Activated naive CD8-positive, alpha-beta T cell treated with anti-CD3 and anti-CD28 coated beads, Interleukin-2, amount 10 ng/mL, durations not matched to agents 7 days and 5 days (primary cell): ENCODE measurements at regions of chr22 and their contacts with region 1.

Region 1: GRCh38 chr22:50469377-50470305 is 5.2 kb downstream of the SBF1 start:
- DNase-seq: peak; percentile 91
- ATAC-seq: peak; percentile 77
- H3K4me3 Mint-ChIP-seq: peak overlapping the region; percentile 77
- H3K27ac Mint-ChIP-seq: peak overlapping the region; percentile 92
- H3K4me1 Mint-ChIP-seq: peaks cover 52% of the 10 kb centered on the region
- H3K27me3 Mint-ChIP-seq: no peaks in the 10 kb centered on the region

Region 2: DNA sequence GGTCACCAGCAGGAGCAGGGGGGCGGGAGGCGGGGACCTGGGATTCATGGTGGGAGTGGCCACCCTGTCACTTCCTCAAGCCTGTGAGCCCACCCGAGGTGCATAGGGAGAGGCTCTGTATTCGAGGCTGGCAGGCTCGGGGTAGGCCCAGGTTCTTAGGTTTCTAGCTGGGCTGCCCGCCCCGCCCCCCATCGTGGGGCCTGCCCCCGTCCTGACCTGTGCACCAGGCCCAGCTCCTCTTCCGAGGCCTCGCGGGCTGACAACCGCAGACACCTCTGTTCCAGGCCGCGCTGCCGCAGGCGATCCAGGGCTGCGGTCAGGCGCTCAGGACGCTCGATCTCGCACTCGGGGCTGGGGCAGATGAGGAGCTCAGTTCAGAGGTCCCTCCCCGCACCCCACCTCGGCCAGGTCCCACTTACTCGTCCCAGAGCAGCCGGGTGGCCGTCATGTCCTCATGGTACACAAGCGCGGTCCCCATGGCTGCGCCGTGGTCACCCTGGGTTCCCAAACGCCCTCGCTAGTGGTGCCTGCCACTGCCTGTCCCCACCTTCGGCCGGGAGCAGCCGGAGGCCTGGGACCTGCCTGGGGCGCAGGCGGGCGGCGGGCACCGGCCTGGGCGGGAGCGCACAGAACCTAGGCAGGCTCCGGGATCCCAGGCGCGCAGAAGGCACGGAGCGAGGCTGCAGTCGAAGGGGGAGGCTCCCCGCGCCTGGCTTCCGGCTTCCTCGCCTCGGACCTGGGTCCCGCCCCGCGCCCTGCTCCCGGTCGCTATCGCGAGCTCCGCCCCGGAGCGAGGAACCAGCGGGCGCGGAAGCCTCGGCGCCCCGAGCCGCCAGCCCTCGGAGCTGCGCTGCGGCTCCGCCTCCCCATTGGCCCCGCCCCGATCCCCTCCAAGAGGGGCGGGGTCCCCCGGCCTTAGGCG is 218.8 kb before region 1 on chr22 and contains the start of gene HDAC10:
- POLR2A ChIA-PET with region 1: interaction called, 11 read pairs
- DNase-seq: peak; percentile 90
- ATAC-seq: peak; percentile 83
- H3K4me3 Mint-ChIP-seq: peak within 1 kb of the TSS; percentile 87
- H3K27ac Mint-ChIP-seq: peak within 1 kb of the TSS; percentile 84
- H3K4me1 Mint-ChIP-seq: peaks cover 7% of the 10 kb centered on the region
- H3K27me3 Mint-ChIP-seq: no peaks in the 10 kb centered on the region
- total RNA-seq, gene HDAC10: 99.1 to 111 TPM

Region 3: GRCh38 chr22:50417411-50418210 is 52.0 kb before region 1 on chr22:
- POLR2A ChIA-PET with region 1: no interaction called
- DNase-seq: no peak
- ATAC-seq: no peak
- H3K4me3 Mint-ChIP-seq: no peak overlapping the region
- H3K27ac Mint-ChIP-seq: no peak overlapping the region
- H3K4me1 Mint-ChIP-seq: peaks cover 2% of the 10 kb centered on the region
- H3K27me3 Mint-ChIP-seq: no peaks in the 10 kb centered on the region

Region 4: DNA sequence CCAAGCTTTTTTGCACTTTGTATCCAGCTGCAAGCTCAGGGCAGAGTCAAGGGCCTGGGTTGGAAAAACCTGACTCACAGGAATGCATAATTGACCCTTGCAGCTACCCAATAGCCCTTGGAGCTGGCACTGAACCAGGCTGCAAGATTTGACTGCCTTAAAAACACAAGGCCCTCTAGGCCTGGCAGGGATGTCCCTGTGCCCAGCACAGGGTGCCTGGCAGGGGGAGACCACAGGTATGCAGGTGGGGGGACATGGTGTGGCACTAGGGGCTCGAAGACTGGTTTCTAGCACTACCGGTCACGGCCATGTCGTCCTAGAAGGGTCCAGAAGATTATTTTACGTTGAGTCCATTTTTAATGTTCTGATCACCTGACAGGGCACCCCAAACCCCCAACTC is 25.0 kb before region 1 on chr22:
- POLR2A ChIA-PET with region 1: interaction called, 13 read pairs
- DNase-seq: no peak
- ATAC-seq: no peak
- H3K4me3 Mint-ChIP-seq: no peak overlapping the region
- H3K27ac Mint-ChIP-seq: peak overlapping the region; percentile 90
- H3K4me1 Mint-ChIP-seq: peaks cover 19% of the 10 kb centered on the region
- H3K27me3 Mint-ChIP-seq: no peaks in the 10 kb centered on the region

Region 5: DNA sequence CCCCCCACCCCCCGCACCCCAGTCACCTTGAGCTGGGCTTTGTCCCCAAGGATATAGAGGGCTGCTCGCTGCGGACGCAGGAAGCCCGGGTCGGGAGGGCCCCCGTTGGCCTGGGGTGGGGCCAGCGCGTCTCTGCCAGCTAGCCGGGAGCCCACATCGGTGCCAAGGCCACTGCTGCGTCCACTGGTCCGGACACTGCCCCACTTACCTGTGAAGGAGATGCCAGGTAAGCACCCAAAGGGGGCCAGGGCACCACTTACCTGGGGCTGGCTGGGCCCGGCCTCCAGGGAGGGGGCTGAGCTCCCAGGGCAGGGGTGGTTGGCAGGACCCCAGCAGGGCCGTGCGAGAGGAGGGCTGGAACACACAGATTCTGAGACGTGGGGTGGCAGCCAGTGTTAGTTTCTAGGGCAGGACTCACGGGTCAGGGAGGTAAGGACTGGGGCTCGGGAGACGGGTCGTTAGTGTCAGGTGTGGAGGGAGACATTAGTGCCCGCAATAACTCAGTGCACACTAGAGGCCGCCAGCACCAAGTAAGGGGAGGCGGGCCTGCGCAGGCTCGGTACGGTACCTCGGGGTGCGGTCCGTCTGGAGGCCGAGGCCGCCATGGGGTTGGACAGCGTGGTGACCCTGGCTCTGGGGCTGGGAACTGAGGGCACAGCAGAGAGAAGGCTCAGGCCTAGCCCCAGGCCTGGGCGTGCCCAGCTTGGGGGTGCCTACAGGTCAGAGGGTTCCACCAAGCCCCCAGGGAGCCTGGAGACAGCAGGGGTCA is 13.0 kb before region 1 on chr22:
- POLR2A ChIA-PET with region 1: interaction called, 13 read pairs
- DNase-seq: no peak
- ATAC-seq: peak; percentile 41
- H3K4me3 Mint-ChIP-seq: no peak overlapping the region
- H3K27ac Mint-ChIP-seq: peak overlapping the region; percentile 45
- H3K4me1 Mint-ChIP-seq: peaks cover 1% of the 10 kb centered on the region
- H3K27me3 Mint-ChIP-seq: no peaks in the 10 kb centered on the region

Region 6: DNA sequence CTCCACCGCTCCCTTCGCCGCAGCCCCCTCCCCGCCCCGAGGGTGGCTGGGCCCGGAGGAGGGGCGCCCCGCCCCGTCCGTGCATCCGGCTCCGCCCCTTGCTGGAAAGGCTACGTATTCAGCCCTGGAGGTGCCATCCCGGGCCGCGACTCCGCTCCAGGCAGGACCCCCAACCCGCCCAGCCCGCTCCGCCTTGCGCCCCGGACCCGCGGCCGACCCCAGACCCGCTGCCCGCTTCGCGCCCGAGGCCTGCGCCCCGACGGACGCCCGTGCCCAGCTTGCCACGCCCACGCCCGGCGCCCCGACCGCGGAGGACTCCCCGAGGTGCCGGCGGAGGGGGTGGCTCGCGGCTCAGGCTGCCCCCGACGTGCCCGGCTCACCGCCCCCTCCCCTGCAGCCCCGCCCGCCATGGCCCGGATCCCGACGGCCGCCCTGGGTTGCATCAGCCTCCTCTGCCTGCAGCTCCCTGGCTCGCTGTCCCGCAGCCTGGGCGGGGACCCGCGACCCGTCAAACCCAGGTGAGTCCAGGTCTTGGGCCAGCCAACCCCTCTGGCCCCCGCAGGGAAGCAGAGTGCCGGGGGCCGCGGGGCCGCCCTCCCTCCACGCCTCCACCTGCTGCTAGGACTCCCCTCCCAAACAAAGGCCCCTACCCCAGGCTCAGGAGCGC is 11.9 kb after region 1 on chr22 and contains the start of gene ADM2:
- POLR2A ChIA-PET with region 1: interaction called, 10 read pairs
- DNase-seq: peak; percentile 82
- ATAC-seq: peak; percentile 82
- H3K4me3 Mint-ChIP-seq: peak within 1 kb of the TSS; percentile 83
- H3K27ac Mint-ChIP-seq: peak within 1 kb of the TSS; percentile 69
- H3K4me1 Mint-ChIP-seq: peaks cover 11% of the 10 kb centered on the region
- H3K27me3 Mint-ChIP-seq: peaks cover 16% of the 10 kb centered on the region
- total RNA-seq, gene ADM2: 6.5 to 6.7 TPM

Region 7: DNA sequence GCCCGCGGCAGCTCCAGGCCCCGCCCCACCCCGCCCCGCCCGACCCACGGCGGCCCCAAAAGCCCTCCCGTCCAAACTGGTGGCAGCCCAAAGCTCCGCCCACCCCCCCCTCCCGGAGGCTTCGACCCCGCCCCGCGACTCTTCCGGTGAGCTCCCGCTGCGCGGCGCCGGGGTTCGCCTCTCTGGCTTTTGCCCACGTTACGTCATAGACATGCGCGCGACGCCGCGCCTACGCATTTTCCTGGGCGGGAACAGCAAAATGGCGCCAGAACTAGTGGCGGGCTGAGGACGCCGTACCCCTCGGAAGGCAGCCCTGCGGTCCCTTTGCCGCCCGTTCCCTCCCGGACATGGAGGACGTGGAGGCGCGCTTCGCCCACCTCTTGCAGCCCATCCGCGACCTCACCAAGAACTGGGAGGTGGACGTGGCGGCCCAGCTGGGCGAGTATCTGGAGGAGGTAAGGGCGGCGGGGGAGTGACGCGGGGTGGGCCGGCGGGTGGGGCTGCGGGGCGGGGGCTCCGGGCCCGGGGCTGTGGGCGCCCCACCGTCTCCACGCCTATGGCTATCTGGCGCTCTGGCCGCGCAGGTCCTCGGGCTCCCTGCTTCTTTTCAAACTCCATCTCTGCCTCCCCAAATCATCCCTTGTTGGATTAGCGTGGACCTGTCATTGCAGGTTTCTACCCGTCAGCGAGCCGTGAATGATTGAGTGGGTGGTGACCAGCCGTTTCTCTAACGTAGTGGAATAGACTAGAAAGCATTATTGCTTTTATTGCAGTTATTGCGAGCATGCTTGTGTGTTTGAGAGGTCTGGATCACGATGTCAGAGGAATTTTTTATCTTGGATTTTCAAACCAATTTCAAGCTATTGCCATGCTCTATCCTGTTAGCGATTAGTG is 38.6 kb after region 1 on chr22 and contains the start of gene NCAPH2:
- POLR2A ChIA-PET with region 1: interaction called, 15 read pairs
- DNase-seq: peak; percentile 98
- ATAC-seq: peak; percentile 72
- H3K4me3 Mint-ChIP-seq: peak within 1 kb of the TSS; percentile 97
- H3K27ac Mint-ChIP-seq: peak within 1 kb of the TSS; percentile 92
- H3K4me1 Mint-ChIP-seq: peaks cover 14% of the 10 kb centered on the region
- H3K27me3 Mint-ChIP-seq: no peaks in the 10 kb centered on the region
- total RNA-seq, gene NCAPH2: 126 TPM

Region 8: GRCh38 chr22:50544078-50544745 is 74.6 kb after region 1 on chr22:
- POLR2A ChIA-PET with region 1: interaction called, 12 read pairs
- DNase-seq: peak; percentile 92
- ATAC-seq: peak; percentile 65
- H3K4me3 Mint-ChIP-seq: peak overlapping the region; percentile 77
- H3K27ac Mint-ChIP-seq: peak overlapping the region; percentile 98
- H3K4me1 Mint-ChIP-seq: peaks cover 51% of the 10 kb centered on the region
- H3K27me3 Mint-ChIP-seq: no peaks in the 10 kb centered on the region